Heart right ventricle (tissue), 16 donors: ENCODE measurements at regions of chr3 and their contacts with region 1.

Region 1: GRCh38 chr3:134373994-134374790 is at the start of gene AMOTL2:
- DNase-seq: peak; percentile 89 to 92
- ATAC-seq: peak; percentile 75 to 90 (median 80)
- H3K4me3 ChIP-seq: peak within 1 kb of the TSS; percentile 57 to 94 (median 82)
- H3K27ac ChIP-seq: peak within 1 kb of the TSS; percentile 95 to 100 (median 100)
- H3K4me1 ChIP-seq: peaks cover 18 to 71% (median 55%) of the 10 kb centered on the region in 9 donors
- H3K27me3 ChIP-seq: peaks cover 0 to 24% (median 0%) of the 10 kb centered on the region in 7 donors
- CTCF ChIP-seq: no peak
- total RNA-seq, gene AMOTL2: 27.8 to 96.6 (median 57.8) TPM

Region 2: DNA sequence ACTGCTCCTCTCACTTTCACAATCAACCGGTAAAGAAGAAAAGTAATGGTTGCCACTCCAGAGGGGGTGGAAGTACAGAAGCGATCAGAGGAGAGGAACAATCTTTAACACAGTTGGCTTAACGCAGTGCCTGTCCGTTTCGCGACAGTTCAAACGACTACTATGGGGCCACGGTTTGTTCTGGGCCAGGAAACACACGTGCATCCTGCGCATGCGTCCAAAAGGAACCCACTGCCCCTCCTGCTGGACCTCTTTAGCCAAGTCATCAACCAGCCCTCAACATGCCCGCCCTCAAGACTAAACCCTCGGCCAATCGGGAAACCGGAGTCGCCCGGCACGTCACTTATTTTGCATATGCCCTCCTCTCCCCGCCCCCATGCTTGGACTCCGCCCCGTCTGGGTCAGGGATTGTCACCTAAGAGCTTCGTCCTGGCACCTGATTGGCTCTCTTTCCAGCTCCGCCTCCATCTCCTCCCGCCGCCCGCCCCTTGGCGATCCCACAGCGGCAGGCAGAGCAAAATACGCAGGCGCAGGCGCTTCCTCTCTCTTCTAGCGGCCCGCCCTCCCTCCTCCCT is 801.1 kb before region 1 on chr3:
- intact Hi-C with region 1: loop called in 1 of 10 experiments (anchors 10 kb)
- DNase-seq: peak; percentile 100
- ATAC-seq: peak; percentile 92 to 98 (median 96)
- H3K4me3 ChIP-seq: peak overlapping the region in 9 of 10 donors; percentile 66 to 91 (median 82)
- H3K27ac ChIP-seq: peak overlapping the region; percentile 94 to 98 (median 96)
- H3K4me1 ChIP-seq: peaks cover 5 to 74% (median 53%) of the 10 kb centered on the region in 9 donors
- H3K27me3 ChIP-seq: no peaks in the 10 kb centered on the region
- CTCF ChIP-seq: peak in 6 of 9 donors; percentile 7 to 48 (median 34)

Region 3: GRCh38 chr3:134212906-134213665 is 161.1 kb before region 1 on chr3:
- intact Hi-C with region 1: loop called in 5 of 10 experiments (anchors 5 to 10 kb)
- DNase-seq: peak; percentile 75 to 78
- ATAC-seq: peak; percentile 77 to 93 (median 84)
- H3K4me3 ChIP-seq: no peak overlapping the region
- H3K27ac ChIP-seq: no peak overlapping the region
- H3K4me1 ChIP-seq: peaks cover 0 to 46% (median 14%) of the 10 kb centered on the region in 9 donors
- H3K27me3 ChIP-seq: no peaks in the 10 kb centered on the region
- CTCF ChIP-seq: peak; percentile 88 to 99 (median 98)

Region 4: DNA sequence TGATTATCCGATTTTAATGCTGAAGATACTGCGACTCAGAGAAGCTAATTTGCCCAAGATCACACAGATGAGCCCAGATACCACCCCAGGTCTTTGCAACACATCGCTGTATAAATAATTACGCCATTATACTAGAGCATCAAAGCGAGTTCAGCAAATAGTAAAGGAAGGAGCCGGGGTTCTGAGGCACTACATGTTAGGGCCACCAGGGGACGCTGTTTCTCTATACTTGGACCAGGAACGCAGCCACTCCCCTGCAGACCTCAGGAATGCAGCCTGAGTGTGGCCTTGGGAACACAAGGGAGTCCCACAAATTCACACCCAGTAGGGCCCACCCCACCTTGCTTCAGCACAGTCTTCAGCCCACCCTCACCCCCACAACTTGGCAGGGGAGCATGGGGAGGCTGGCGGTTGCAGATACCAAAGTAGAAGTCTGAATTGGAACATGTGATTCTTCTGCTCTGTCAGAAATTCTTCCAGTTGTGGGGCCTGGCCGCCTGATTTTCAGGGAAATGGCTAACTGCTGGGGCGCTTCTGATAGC is 65.8 kb before region 1 on chr3:
- intact Hi-C with region 1: loop called in 9 of 10 experiments (anchors 1 to 5 kb)
- DNase-seq: peak; percentile 76 to 81
- ATAC-seq: peak; percentile 58 to 83 (median 72)
- H3K4me3 ChIP-seq: peak overlapping the region in 6 of 10 donors; percentile 10 to 33 (median 18)
- H3K27ac ChIP-seq: peak overlapping the region in 8 of 10 donors; percentile 50 to 84 (median 76)
- H3K4me1 ChIP-seq: peaks cover 5 to 37% (median 30%) of the 10 kb centered on the region in 9 donors
- H3K27me3 ChIP-seq: peaks cover 0 to 19% (median 0%) of the 10 kb centered on the region in 7 donors
- CTCF ChIP-seq: peak; percentile 97 to 100 (median 99)

Region 5: GRCh38 chr3:134466331-134466730 is 92.1 kb after region 1 on chr3:
- intact Hi-C with region 1: loop called in 7 of 10 experiments (anchors 2 to 5 kb)
- DNase-seq: no peak
- ATAC-seq: no peak
- H3K4me3 ChIP-seq: no peak overlapping the region
- H3K27ac ChIP-seq: no peak overlapping the region
- H3K4me1 ChIP-seq: peaks cover 8 to 41% (median 26%) of the 10 kb centered on the region in 9 donors
- H3K27me3 ChIP-seq: no peaks in the 10 kb centered on the region
- CTCF ChIP-seq: no peak

Region 6: DNA sequence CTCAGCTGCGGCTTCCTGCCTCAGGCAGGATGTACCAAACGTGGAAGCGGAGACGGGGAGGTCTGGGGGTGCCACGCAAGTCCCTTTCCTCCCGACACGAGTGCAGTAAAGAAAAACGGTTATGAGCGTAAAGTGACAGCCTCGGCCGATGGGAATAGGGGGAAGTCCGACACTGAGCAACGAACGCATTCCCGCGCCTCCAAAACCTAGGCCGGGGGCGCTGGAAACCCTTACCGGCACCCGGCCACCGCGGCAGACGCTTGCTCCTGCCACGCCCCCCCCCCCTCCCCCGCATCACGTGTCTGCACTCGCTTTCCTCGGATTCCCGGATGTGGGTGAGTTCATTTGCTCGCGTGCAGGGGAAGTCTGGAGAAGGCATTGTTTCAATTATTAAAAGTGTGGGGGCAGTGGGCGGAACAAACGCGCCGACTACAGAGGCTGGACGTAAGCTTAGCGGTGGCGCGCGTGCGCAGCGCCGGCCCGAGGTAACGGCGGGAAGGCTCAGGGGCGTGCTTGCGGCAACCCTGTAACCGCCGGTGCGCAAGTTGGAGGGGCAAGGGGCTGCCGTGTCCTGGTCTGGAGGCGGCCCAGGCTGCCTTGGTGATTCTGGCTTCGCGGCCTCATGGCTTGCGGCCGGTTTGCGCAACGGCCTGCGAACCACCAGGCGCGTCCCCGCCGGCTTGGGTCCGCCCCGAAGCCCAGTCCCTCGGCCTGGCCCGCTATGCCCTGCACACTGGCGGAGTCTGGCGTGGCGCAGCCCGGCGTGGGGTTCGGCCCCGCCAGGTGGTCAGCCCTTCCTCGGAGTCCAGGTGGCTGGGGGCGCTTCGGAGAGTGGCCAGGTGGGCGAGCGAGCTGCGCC is 111.8 kb after region 1 on chr3 and contains the starts of genes ANAPC13 and CEP63:
- intact Hi-C with region 1: loop called in 3 of 10 experiments (anchors 5 kb)
- DNase-seq: peak; percentile 88 to 97
- ATAC-seq: peak; percentile 91 to 97 (median 94)
- H3K4me3 ChIP-seq: peak within 1 kb of the TSS; percentile 71 to 94 (median 79)
- H3K27ac ChIP-seq: peak within 1 kb of the TSS; percentile 93 to 99 (median 96)
- H3K4me1 ChIP-seq: peaks cover 11 to 53% (median 40%) of the 10 kb centered on the region in 9 donors
- H3K27me3 ChIP-seq: no peaks in the 10 kb centered on the region
- CTCF ChIP-seq: no peak
- total RNA-seq, gene ANAPC13: 68.2 to 119 (median 84.0) TPM
- total RNA-seq, gene CEP63: 27.6 to 38.8 (median 31.0) TPM